ENCODE measurements at regions of chr3 and their contacts with region 1.

Region 1: DNA sequence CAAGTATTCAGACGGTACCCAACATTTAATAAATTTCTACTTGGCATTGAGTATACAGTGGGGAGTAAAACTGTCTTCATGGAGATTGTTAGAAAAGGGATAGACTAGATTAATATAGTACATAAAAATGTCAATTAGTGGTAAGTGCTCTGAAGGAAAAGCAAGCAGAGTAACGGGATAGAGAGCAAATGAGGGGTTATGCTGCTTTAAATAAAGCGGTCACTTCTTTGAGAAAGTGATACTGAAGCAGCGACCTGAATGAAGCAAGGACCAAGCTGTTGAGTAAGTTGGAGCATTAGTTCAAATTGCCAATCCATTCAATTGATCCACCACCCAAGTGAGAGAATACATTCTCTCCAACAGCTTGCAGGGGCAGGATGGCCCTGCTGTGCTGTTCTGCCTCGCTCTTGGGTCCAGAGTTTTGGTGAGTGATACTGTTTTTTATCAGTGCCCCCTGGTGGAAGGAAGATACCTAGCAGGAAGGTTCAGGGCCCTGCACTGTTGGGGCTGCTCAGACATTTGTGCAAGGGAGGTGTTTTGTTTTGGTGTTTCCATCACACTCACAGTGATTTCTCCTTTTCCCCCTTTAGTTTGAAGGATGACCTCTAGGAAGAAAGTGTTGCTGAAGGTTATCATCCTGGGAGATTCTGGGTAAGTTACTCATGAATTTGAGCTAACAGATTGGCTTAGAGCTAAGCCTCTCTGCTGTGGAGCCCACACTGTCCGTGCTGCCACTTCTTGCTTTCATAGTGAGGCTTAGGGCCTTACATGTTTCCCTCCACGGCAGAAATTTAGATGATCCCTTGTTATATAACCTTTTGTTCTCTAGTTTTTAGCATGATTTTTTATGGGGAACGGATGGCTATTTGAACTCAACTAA is 69.0 kb downstream of the RAB7A start:
- DNase-seq: peak in 1 of 2 donors; percentile 60
- H3K4me3 ChIP-seq: no peak overlapping the region
- H3K27ac ChIP-seq: no peak overlapping the region
- H3K4me1 ChIP-seq: peaks cover 0 to 41% (median 15%) of the 10 kb centered on the region in 4 donors
- H3K27me3 ChIP-seq: no peaks in the 10 kb centered on the region
- CTCF ChIP-seq: peak; percentile 74 to 77

Region 2: DNA sequence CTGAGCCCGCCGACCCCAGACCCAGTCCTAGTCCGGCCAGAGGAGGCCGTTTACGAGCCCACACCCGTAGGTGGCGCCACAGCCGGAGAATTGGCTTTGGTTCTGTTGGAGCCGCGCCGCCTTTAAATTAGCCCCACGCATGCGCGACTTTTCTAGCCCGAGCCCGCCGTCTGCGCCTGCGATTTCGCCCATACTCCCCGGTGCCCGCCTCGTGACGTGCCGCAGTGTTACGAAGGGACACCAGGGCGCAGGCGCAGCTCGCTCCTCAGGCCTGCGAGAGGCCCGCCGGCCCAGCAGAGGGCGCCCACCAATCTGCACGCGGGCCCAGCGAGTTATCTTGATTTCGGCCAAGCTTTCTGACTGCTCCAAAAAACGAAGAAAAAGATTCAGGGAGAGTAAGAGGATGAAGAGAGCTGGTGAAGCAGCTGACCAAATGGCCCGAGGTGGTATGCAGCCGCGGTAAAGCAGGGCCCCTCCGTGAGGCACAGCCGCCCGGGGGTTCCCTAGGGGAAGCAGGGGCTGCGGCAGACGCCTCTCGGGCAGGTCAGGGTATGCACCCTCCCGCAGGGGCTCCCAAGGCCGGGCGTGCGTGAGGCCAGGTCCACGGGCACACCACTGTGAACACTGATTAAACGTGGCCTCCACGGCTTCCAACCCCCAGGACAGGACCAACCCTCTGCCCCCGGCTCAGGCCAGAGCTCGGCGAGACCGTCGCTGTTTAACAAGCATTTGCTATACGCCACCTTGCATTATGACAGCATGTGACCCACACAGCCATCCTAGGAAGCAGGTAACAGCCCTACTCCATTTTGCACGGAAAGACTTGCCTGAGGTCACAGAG is 177.2 kb before region 1 on chr3:
- intact Hi-C with region 1: loop called (anchors 5 kb)
- DNase-seq: peak; percentile 97 to 99
- H3K4me3 ChIP-seq: peak overlapping the region; percentile 85 to 98
- H3K27ac ChIP-seq: peak overlapping the region; percentile 85 to 91
- H3K4me1 ChIP-seq: peaks cover 0 to 20% (median 16%) of the 10 kb centered on the region in 4 donors
- H3K27me3 ChIP-seq: no peaks in the 10 kb centered on the region
- CTCF ChIP-seq: peak; percentile 94 to 97

Region 3: GRCh38 chr3:128845778-128846485 is 50.9 kb after region 1 on chr3:
- intact Hi-C with region 1: no loop called
- DNase-seq: peak; percentile 71 to 89
- H3K4me3 ChIP-seq: peak overlapping the region; percentile 43 to 54
- H3K27ac ChIP-seq: peak overlapping the region; percentile 57 to 68
- H3K4me1 ChIP-seq: peaks cover 0 to 13% (median 11%) of the 10 kb centered on the region in 4 donors
- H3K27me3 ChIP-seq: no peaks in the 10 kb centered on the region
- CTCF ChIP-seq: peak; percentile 64 to 78